ENCODE measurements at regions of chr11 and their contacts with region 1.

Region 1: GRCh38 chr11:13335319-13335718 is 57.7 kb downstream of the BMAL1 start:
- DNase-seq: peak; percentile 86
- ATAC-seq: peak; percentile 41
- H3K4me3 Mint-ChIP-seq: no peak overlapping the region
- H3K27ac Mint-ChIP-seq: peak overlapping the region; percentile 26
- H3K4me1 Mint-ChIP-seq: peaks cover 84% of the 10 kb centered on the region
- H3K27me3 Mint-ChIP-seq: no peaks in the 10 kb centered on the region

Region 2: GRCh38 chr11:13210424-13210823 is 124.9 kb before region 1 on chr11:
- CTCF ChIA-PET with region 1: interaction called, 20 read pairs
- DNase-seq: peak; percentile 57
- ATAC-seq: peak; percentile 37
- H3K4me3 Mint-ChIP-seq: no peak overlapping the region
- H3K27ac Mint-ChIP-seq: no peak overlapping the region
- H3K4me1 Mint-ChIP-seq: peaks cover 33% of the 10 kb centered on the region
- H3K27me3 Mint-ChIP-seq: no peaks in the 10 kb centered on the region

Region 3: GRCh38 chr11:13256216-13256615 is 79.1 kb before region 1 on chr11:
- CTCF ChIA-PET with region 1: interaction called, 31 read pairs
- DNase-seq: no peak
- ATAC-seq: no peak
- H3K4me3 Mint-ChIP-seq: no peak overlapping the region
- H3K27ac Mint-ChIP-seq: no peak overlapping the region
- H3K4me1 Mint-ChIP-seq: peaks cover 14% of the 10 kb centered on the region
- H3K27me3 Mint-ChIP-seq: peaks cover 10% of the 10 kb centered on the region

Region 4: GRCh38 chr11:13276832-13277767 is 58.2 kb before region 1 on chr11:
- CTCF ChIA-PET with region 1: interaction called, 58 read pairs
- DNase-seq: peak; percentile 98
- ATAC-seq: peak; percentile 89
- H3K4me3 Mint-ChIP-seq: peak overlapping the region; percentile 92
- H3K27ac Mint-ChIP-seq: peak overlapping the region; percentile 89
- H3K4me1 Mint-ChIP-seq: peaks cover 45% of the 10 kb centered on the region
- H3K27me3 Mint-ChIP-seq: peaks cover 35% of the 10 kb centered on the region

Region 5: DNA sequence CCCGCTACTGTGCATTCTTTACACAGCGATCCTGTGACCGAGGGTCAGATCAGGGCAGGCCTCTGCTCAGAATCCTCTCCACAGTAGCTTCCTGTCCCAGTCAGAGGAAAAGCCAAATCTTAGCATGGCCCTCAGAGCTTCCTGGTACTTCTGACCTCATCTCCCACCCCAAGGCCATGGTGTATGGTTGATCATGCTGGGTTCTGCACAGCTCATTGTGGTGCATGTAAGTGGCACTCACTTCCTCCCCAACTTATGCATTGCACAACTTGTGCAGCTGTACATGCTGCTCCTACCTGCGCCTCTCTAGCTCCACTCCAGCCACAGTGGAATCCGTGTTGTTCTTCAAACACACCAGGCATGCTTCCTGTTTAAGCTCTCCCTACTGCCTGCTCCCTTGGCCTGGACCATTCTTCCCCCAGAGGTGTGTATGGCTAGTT is 37.4 kb before region 1 on chr11:
- CTCF ChIA-PET with region 1: interaction called, 45 read pairs
- DNase-seq: peak; percentile 91
- ATAC-seq: peak; percentile 95
- H3K4me3 Mint-ChIP-seq: peak overlapping the region; percentile 12
- H3K27ac Mint-ChIP-seq: peak overlapping the region; percentile 90
- H3K4me1 Mint-ChIP-seq: peaks cover 66% of the 10 kb centered on the region
- H3K27me3 Mint-ChIP-seq: no peaks in the 10 kb centered on the region

Region 6: DNA sequence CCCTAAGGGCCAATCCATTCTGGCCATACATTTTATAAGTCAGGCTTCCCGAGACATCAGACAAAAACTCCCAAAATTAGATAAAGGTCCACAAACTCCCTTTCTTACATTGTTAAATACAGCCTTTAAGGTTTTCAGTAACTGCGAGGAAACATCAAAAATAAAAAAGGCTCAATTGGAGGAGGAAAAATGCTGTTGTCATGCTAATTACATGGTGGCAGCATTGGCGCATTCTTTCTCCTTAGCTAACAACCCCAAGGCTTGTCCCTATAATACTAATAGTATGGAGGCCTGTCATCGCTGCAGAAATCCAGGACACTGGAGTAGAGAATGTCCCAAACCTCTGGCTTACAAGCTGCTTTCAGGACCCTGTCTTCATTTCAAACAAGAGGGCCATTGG is 136.7 kb after region 1 on chr11:
- CTCF ChIA-PET with region 1: no interaction called
- DNase-seq: no peak
- ATAC-seq: no peak
- H3K4me3 Mint-ChIP-seq: no peak overlapping the region
- H3K27ac Mint-ChIP-seq: no peak overlapping the region
- H3K4me1 Mint-ChIP-seq: no peaks in the 10 kb centered on the region
- H3K27me3 Mint-ChIP-seq: peaks cover 23% of the 10 kb centered on the region

Region 7: GRCh38 chr11:13503393-13503792 is 168.1 kb after region 1 on chr11:
- CTCF ChIA-PET with region 1: no interaction called
- DNase-seq: no peak
- ATAC-seq: no peak
- H3K4me3 Mint-ChIP-seq: no peak overlapping the region
- H3K27ac Mint-ChIP-seq: no peak overlapping the region
- H3K4me1 Mint-ChIP-seq: no peaks in the 10 kb centered on the region
- H3K27me3 Mint-ChIP-seq: peaks cover 17% of the 10 kb centered on the region

Measured in activated CD8-positive, alpha-beta memory T cell treated with anti-CD3 and anti-CD28 coated beads, Interleukin-2, amount 10 ng/mL, durations not matched to agents 7 days and 5 days (primary cell).